GM10248 (cell line): ENCODE measurements at regions of chr10 and their contacts with region 1.

Region 1: GRCh38 chr10:87842776-87843497 is 20.4 kb downstream of the KLLN start:
- DNase-seq: no peak
- CTCF ChIP-seq: no peak

Region 2: DNA sequence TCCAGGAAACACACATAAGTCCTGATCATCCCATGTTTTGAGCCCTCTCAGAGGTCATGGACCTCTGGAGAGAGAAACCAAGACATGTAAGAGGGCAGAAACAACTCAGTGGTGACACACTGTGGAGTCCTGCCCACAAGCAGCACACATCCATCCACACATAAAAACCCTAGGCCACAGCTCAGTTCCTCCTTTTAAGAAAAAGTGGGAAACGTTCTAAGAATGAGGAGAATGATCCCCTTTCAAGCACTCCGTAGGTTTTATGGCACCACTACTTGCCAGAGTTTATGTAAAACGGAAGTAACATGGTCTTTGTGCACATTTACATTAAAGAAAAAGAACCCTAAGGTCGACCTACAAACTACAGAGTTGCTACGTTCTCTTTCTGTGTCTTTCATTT is 44.9 kb before region 1 on chr10:
- CTCF ChIA-PET with region 1: no interaction called
- POLR2A ChIA-PET with region 1: no interaction called
- DNase-seq: no peak
- CTCF ChIP-seq: no peak

Region 3: DNA sequence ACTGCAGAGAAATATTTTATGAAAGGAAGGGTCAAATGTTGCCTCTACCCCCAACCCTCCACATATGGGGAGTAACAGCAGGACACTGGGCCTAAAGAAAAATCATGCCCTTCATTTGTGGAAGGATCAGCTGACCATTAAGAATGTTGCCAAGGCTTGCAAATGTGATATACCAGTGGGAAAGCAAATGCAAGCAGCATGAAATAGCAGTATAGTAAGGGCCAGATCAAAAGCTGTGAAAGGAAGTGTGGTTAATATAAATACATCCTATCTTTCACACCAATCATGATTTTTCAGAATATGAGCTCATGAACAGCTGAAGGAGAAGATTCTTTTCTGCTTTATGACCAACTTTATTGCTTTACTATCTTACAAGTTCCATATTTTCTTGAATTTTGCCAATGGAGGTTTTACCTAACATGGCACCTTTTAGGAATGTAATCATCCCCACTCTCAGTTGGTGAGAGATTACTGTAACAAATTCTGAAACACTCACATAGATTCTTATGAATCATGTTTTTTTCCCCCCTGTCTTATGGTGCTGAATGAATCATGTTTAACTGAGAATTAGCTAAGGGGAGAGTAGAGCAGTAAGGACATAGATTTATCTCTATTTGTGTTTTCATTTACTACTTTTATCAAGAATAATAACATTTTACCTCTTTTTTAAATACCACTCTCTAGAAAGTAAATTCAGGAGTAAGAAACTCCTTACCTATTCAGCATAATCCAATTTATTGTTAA is 12.8 kb before region 1 on chr10:
- CTCF ChIA-PET with region 1: interaction called, 31 read pairs
- POLR2A ChIA-PET with region 1: no interaction called
- DNase-seq: no peak
- CTCF ChIP-seq: no peak